CD8-positive, alpha-beta T cell (primary cell): ENCODE measurements at regions of chr9 and their contacts with region 1.

Region 1: DNA sequence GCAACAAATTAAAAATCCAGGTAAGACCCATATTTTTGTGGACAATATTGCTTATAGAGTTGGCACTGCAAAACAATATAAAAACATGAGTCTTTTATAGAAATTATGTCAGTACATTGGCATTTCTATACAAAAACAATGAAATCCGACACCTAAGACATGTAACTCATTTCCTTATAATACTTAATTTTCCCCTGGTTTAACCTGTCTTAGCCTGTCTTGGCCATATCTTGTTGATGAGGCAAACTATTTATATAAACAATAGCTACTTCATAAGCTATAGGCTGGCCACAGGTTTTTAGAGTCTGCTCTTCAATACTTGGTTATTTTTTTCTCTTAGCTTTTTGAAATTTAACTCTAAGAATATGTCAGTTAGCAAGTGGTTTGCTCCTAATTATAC is 44.7 kb upstream of the IZUMO3 start:
- DNase-seq: no peak
- ATAC-seq: no peak
- H3K4me3 ChIP-seq: no peak overlapping the region
- H3K4me3 Mint-ChIP-seq: no peak overlapping the region
- H3K27ac ChIP-seq: no peak overlapping the region
- H3K27ac Mint-ChIP-seq: no peak overlapping the region
- H3K4me1 ChIP-seq: no peaks in the 10 kb centered on the region
- H3K4me1 Mint-ChIP-seq: no peaks in the 10 kb centered on the region
- H3K27me3 ChIP-seq: no peaks in the 10 kb centered on the region
- H3K27me3 Mint-ChIP-seq: no peaks in the 10 kb centered on the region
- CTCF ChIP-seq: no peak

Region 2: DNA sequence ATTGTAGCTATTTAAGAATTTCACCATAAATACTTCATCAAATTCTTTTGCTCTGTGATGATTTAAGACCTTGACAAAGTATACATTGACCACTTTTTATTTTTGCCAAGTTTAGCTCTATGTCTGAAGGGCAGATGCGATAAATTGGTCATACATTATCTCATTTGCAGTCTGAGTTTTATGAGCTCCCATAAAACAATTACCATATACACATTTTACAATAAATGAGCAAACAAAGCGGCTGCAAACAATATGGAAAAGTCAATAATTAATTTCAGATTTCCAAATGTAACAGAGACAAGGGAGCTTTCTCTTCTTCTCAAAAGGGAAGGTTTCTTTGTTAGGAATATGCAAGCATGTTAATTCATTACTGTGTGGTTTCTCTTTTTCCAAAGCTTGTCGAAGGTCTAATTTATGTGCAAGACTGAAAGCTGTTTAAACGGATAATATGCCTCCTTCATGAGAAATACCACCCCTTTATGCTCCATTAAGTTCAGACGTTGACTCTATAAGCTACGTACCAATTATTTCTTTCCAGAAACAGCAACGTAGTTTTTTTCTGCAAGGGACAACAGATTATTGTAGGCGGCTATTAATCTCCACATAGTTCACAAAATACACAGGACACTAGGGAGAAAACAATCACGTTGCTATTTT is 37.8 kb before region 1 on chr9:
- CTCF ChIA-PET with region 1: no interaction called
- POLR2A ChIA-PET with region 1: no interaction called
- intact Hi-C with region 1: loop called in 1 of 2 experiments (anchors 5 kb)
- DNase-seq: no peak
- ATAC-seq: no peak
- H3K4me3 ChIP-seq: no peak overlapping the region
- H3K4me3 Mint-ChIP-seq: no peak overlapping the region
- H3K27ac ChIP-seq: no peak overlapping the region
- H3K27ac Mint-ChIP-seq: no peak overlapping the region
- H3K4me1 ChIP-seq: no peaks in the 10 kb centered on the region
- H3K4me1 Mint-ChIP-seq: no peaks in the 10 kb centered on the region
- H3K27me3 ChIP-seq: no peaks in the 10 kb centered on the region
- H3K27me3 Mint-ChIP-seq: no peaks in the 10 kb centered on the region
- CTCF ChIP-seq: no peak